Head of caudate nucleus (tissue), 42 donors: ENCODE measurements at regions of chr11 and their contacts with region 1.

Region 1: DNA sequence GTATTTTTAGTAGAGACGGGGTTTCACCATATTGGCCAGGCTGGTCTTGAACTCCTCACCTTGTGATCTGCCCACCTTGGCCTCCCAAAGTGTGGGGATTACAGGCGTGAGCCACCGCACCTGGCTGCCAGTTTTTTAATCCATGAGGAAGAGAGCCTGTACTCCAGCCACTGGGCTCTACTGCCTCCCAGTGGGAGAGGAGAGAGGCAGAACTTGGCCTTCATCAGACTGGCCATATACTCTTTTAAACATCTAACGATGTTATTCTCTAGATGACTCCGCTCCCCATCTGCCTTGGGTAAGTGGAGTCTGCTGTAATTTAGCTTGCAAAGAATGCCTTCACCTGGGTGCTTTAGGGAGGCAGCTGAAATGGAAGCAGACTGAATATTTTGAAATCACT is 34.6 kb downstream of the SLC6A5 start:
- DNase-seq: no peak

Region 2: GRCh38 chr11:22130462-22131053 is 1496.5 kb after region 1 on chr11:
- intact Hi-C with region 1: loop called (anchors 10 kb)
- DNase-seq: peak in 1 of 42 donors; percentile 3